Brain microvascular endothelial cell (primary cell): ENCODE measurements at regions of chr1 and their contacts with region 1.

Region 1: DNA sequence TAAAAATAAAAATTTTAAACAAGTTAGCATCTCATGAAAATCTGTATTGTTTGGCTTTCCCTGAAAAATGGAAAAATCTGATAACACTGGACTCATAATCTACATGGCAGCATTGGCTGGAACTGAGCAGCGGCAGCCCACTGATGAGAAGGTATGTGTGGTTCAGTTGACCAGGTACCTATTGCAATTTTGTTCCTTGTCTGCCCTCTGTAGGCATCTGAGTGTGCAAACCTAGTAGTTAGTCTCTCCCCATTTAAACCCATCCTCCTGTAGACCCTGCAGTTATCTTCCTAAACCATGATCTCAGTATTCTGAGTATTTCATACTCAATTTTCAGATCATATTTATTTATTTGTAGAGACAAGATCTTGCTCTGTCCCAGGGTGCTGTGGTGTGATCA is 59.4 kb upstream of the SERBP1 start:
- DNase-seq: no peak
- H3K4me3 ChIP-seq: no peak overlapping the region
- H3K27ac ChIP-seq: no peak overlapping the region
- H3K27me3 ChIP-seq: no peaks in the 10 kb centered on the region
- CTCF ChIP-seq: peak; percentile 37

Region 2: GRCh38 chr1:67347688-67348472 is 141.8 kb before region 1 on chr1:
- in situ Hi-C with region 1: loop called (anchors 25 kb)
- DNase-seq: peak; percentile 49
- H3K4me3 ChIP-seq: no peak overlapping the region
- H3K27ac ChIP-seq: no peak overlapping the region
- H3K27me3 ChIP-seq: no peaks in the 10 kb centered on the region
- CTCF ChIP-seq: peak; percentile 89

Region 3: DNA sequence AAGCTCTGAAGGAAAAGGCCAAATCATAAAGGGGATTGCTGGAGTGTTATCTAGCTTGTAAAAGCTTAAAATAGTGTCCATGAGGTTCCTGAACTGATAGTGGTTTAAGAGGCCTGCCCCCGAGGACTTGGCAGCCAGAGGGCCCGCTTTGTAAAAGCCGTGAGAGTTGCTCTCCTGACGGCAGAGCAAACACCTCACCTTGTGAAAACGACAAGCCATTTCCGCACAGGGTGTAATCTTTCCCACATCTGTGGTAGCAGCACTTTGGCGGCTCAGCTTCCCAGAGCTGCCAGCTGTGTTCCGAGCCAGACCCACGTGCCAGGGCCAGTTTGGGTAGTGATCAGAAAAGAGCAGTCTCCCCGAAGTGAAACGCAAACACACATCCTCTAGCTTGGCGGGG is 96.4 kb before region 1 on chr1:
- in situ Hi-C with region 1: no loop called
- DNase-seq: no peak
- H3K4me3 ChIP-seq: no peak overlapping the region
- H3K27ac ChIP-seq: no peak overlapping the region
- H3K27me3 ChIP-seq: no peaks in the 10 kb centered on the region
- CTCF ChIP-seq: no peak